ENCODE measurements at regions of chr16 and their contacts with region 1.

Region 1: GRCh38 chr16:24189941-24190340 is 66.2 kb upstream of the CACNG3 start:
- DNase-seq: no peak
- H3K4me3 ChIP-seq: no peak overlapping the region
- H3K27ac ChIP-seq: no peak overlapping the region
- H3K4me1 ChIP-seq: no peaks in the 10 kb centered on the region
- H3K27me3 ChIP-seq: no peaks in the 10 kb centered on the region
- CTCF ChIP-seq: no peak

Region 2: DNA sequence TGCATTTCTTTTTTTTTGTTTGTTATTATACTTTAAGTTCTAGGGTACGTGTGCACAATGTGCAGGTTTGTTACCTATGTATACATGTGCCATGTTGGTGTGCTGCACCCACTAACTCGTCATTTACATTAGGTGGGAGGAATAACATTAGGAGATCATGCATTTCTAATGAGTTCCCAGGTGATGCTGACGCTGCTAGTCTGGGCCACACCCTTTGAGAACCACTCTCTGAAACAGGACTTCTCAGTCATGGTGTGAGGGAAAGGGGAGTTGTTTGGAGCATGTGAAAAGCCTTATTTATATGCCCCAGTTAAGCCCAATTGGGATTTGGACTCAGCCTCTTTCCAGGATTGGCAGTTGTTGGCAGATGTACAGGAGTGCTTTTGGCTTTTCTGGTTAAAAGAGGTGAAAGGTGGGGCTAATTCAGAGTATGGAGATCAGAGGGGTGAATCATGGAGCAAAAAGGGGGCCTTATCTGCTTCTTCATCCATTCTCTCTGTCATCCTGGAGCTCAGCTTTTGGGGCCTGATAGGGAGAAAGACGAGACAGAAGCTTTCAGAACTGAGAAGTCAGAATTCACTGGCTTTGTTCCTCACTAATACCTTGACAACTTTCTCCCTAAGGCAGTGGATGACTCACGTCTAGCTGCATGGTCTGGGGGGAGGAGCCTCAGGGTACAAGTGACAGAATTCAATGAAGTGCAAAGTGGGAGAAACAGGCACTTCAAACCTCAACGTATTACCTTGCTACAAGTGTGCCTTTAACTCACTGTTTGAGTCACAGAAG is 113.8 kb before region 1 on chr16:
- intact Hi-C with region 1: no loop called
- DNase-seq: no peak
- H3K4me3 ChIP-seq: no peak overlapping the region
- H3K27ac ChIP-seq: peak overlapping the region in 1 of 2 donors; percentile 37
- H3K4me1 ChIP-seq: peaks cover 0 to 35% (median 3%) of the 10 kb centered on the region in 4 donors
- H3K27me3 ChIP-seq: no peaks in the 10 kb centered on the region
- CTCF ChIP-seq: no peak

Region 3: GRCh38 chr16:24125214-24125613 is 64.7 kb before region 1 on chr16:
- intact Hi-C with region 1: loop called (anchors 10 kb)
- DNase-seq: no peak
- H3K4me3 ChIP-seq: no peak overlapping the region
- H3K27ac ChIP-seq: no peak overlapping the region
- H3K4me1 ChIP-seq: no peaks in the 10 kb centered on the region
- H3K27me3 ChIP-seq: no peaks in the 10 kb centered on the region
- CTCF ChIP-seq: no peak